Activated CD8-positive, alpha-beta memory T cell treated with anti-CD3 and anti-CD28 coated beads, Interleukin-2, amount 10 ng/mL, durations not matched to agents 7 days and 5 days (primary cell): ENCODE measurements at regions of chr12 and their contacts with region 1.

Region 1: DNA sequence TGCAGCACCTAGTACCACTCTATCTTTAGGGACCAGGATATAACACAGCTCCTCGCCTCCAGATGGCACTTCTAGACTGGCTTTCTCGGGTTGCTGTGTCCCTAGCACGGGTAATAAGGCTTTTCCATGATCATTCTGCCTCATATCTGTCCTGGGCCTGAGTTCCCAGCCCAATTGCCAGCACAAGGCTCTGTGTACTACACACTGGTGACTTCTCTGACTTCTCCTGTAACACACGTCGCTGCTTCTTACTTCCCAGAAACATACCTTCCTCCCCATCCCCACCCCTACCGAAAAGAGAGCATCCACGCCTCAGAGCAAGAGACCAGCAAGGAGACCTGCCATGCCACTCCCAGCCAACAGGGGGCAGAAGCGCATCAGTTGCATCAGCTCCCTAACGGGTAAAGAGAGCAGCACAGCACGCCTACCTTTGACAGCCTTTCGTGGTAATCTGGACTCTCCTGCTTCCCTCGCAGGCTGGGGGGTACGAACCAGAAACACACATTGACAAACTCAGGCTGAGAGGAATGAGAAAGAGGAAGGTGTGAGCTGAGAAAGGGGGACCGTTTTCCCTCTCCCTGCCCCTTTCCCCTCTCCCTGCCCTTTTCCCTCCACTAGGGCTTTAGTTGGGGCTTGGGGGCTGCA is 21.2 kb upstream of the ZNF740 start:
- DNase-seq: peak; percentile 96
- ATAC-seq: peak; percentile 99
- H3K4me3 Mint-ChIP-seq: peak overlapping the region; percentile 4
- H3K27ac Mint-ChIP-seq: peak overlapping the region; percentile 72
- H3K4me1 Mint-ChIP-seq: peaks cover 17% of the 10 kb centered on the region
- H3K27me3 Mint-ChIP-seq: no peaks in the 10 kb centered on the region

Region 2: GRCh38 chr12:53174881-53175491 is 15.7 kb after region 1 on chr12:
- CTCF ChIA-PET with region 1: interaction called, 63 read pairs
- DNase-seq: no peak
- ATAC-seq: no peak
- H3K4me3 Mint-ChIP-seq: no peak overlapping the region
- H3K27ac Mint-ChIP-seq: no peak overlapping the region
- H3K4me1 Mint-ChIP-seq: peaks cover 26% of the 10 kb centered on the region
- H3K27me3 Mint-ChIP-seq: no peaks in the 10 kb centered on the region

Region 3: GRCh38 chr12:53200458-53201176 is 41.3 kb after region 1 on chr12:
- CTCF ChIA-PET with region 1: interaction called, 30 read pairs
- DNase-seq: peak; percentile 75
- ATAC-seq: peak; percentile 35
- H3K4me3 Mint-ChIP-seq: peak overlapping the region; percentile 76
- H3K27ac Mint-ChIP-seq: peak overlapping the region; percentile 94
- H3K4me1 Mint-ChIP-seq: peaks cover 80% of the 10 kb centered on the region
- H3K27me3 Mint-ChIP-seq: no peaks in the 10 kb centered on the region

Region 4: DNA sequence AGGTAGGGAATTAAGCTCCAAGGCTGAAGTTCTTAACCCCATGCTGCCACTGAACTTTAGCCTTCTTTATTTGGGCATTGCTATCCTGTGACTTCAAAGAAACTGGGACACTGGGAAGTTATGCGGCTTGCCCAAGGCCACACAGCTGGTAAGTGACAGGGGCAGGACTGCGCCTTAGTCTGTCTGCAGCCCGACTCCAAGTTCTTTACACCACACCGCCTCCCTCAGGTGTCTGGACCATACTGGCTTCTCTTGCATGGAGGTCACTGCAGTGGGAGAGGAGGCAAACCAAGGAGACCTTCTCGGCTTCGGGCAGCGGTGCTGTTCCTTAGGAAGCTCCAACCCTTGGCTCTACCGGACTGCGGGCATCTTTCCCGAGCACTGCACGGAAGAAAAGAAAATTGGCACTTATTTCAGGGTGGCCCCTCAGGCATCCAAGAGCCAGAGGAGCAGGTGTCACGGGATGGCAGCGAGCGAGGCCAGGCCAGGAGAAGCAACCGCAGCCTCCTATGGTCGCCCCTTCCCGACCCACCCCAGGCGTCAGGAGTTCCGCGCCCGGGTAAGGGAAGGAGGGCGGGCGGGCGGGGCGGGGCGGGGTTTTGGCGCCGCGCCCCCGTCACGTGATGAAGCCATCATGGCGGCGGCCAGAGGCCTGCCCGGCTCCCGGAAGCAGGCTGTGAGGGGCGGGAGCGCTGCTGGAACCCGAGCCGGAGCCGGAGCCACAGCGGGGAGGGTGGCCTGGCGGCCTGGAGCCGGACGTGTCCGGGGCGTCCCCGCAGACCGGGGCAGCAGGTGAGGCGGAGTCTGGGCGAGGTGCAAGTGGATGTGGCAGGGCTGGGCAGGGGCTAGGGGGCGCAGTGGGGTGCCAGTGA is 92.4 kb after region 1 on chr12:
- CTCF ChIA-PET with region 1: interaction called, 21 read pairs
- DNase-seq: peak; percentile 81
- ATAC-seq: peak; percentile 89
- H3K4me3 Mint-ChIP-seq: peak overlapping the region; percentile 99
- H3K27ac Mint-ChIP-seq: peak overlapping the region; percentile 88
- H3K4me1 Mint-ChIP-seq: peaks cover 42% of the 10 kb centered on the region
- H3K27me3 Mint-ChIP-seq: no peaks in the 10 kb centered on the region

Region 5: DNA sequence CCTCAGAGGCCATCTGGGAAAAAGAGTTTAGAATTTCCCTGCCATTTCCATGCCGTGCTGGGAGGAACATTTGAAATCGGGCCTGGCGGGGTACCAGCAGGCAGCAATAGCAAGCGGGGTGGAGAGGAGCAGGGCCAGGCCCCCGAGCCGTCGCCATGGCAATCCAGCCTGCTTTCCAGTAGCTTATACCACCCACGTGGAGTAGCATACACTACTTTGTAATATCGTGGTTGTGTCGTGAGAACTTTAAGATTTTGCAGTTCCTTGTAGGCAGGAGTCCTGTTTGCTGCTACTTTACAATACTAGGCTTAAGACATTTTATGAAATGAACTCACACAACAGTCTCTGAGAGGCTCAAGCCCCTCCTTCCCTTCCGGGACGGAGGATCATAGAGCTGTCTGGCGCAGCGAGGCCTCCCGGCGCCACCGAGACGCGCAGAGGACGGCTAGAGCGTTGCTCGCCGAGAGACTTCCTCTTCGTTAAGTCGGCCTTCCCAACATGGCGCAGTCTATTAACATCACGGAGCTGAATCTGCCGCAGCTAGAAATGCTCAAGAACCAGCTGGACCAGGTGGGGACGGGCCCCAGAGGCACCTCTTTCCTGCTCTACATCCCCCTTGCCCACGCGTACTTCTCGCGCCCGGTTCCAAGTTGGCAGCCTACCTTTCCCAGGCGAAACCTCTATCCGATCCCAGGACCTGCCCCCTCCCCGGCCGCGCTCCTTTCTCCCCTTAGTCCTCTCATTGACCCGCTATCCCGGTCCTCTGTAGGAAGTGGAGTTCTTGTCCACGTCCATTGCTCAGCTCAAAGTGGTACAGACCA is 136.0 kb after region 1 on chr12 and contains the start of gene PFDN5:
- CTCF ChIA-PET with region 1: interaction called, 17 read pairs
- DNase-seq: peak; percentile 93
- ATAC-seq: peak; percentile 88
- H3K4me3 Mint-ChIP-seq: peak within 1 kb of the TSS; percentile 98
- H3K27ac Mint-ChIP-seq: peak within 1 kb of the TSS; percentile 92
- H3K4me1 Mint-ChIP-seq: peaks cover 49% of the 10 kb centered on the region
- H3K27me3 Mint-ChIP-seq: no peaks in the 10 kb centered on the region
- total RNA-seq, gene PFDN5: 283 to 298 TPM